ENCODE measurements at regions of chr15 and their contacts with region 1.

Region 1: GRCh38 chr15:60374628-60375081 is 23.1 kb downstream of the ANXA2 start:
- DNase-seq: peak; percentile 99
- H3K4me3 Mint-ChIP-seq: peak overlapping the region; percentile 64
- H3K27ac Mint-ChIP-seq: peak overlapping the region; percentile 92
- H3K4me1 Mint-ChIP-seq: peaks cover 67% of the 10 kb centered on the region
- H3K27me3 Mint-ChIP-seq: no peaks in the 10 kb centered on the region
- CTCF ChIP-seq: no peak

Region 2: GRCh38 chr15:60343221-60343970 is 31.3 kb before region 1 on chr15:
- CTCF ChIA-PET with region 1: interaction called, 4 read pairs
- POLR2A ChIA-PET with region 1: interaction called, 11 read pairs
- intact Hi-C with region 1: no loop called
- DNase-seq: no peak
- H3K4me3 Mint-ChIP-seq: no peak overlapping the region
- H3K27ac Mint-ChIP-seq: peak overlapping the region; percentile 63
- H3K4me1 Mint-ChIP-seq: peaks cover 30% of the 10 kb centered on the region
- H3K27me3 Mint-ChIP-seq: no peaks in the 10 kb centered on the region
- CTCF ChIP-seq: no peak

Region 3: DNA sequence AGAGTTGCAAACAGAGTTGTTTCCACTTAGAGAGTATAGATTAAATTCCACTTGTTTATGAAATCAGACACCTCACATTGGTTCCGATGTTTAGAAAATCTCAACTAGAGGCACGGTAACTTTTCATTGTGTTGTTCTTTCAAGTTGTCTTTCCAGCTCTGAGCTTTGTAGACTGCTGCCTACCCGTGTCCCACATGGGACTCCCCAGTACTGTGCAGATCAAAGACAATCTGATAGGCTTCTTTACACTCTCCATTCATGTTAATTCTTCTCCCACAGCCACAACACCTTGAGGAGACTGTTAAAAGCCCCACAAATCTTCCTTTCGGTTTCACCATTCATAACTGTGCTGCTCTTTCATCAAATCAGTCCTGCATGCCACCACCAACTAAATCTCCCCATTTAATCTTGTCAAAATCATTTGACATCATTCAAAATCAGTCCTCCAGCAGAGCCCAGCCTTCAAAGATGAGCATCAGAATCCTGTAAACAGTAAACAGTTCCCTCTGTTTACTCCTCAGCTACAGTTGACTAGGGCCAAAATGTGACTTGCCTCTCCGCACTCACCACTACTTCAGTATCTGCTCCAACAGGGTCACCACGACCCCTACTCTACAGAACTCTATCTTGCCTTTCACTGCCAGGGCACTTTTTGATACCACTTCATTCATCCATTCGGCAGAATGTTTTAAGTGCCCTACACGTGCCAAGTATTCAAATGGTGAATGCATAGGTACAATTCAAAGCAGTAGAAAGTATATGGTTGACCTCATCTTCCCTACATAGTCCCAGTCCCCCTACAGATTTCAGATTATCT is 14.8 kb after region 1 on chr15:
- CTCF ChIA-PET with region 1: interaction called, 7 read pairs
- POLR2A ChIA-PET with region 1: interaction called, 461 read pairs
- intact Hi-C with region 1: loop called (anchors 1 kb)
- DNase-seq: peak; percentile 33
- H3K4me3 Mint-ChIP-seq: peak overlapping the region; percentile 69
- H3K27ac Mint-ChIP-seq: peak overlapping the region; percentile 91
- H3K4me1 Mint-ChIP-seq: peaks cover 69% of the 10 kb centered on the region
- H3K27me3 Mint-ChIP-seq: no peaks in the 10 kb centered on the region
- CTCF ChIP-seq: no peak

Region 4: DNA sequence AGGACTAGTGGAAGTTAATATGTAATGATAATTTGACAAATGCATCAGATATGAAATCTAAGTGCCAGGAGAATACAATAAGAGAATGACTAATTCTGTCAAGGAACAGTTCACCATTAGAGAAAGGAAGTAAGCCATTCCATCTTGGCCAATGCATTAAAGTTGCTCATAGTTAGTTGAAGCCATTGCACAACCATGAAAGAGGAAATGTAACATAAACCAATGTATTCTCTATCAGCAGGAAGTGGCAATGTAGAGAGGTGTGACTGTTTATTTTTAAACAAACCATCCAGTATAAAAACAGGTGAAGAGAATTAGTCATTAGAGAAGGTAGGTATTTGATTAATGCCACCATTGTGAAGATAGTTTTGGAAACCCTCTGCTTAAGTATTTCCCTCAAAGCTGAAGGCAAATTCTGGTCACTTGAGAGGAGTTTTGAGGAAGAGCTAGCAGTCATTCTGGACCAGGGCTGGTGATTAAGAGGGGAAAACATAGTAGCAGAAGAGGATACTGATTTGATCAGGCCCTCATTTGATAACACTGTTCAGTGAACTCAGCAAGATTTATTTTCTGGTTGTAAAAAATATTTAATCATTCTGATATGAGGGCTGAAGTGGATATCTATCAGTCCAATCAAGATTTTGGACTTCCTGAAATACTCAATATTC is 33.9 kb after region 1 on chr15:
- CTCF ChIA-PET with region 1: no interaction called
- POLR2A ChIA-PET with region 1: interaction called, 58 read pairs
- intact Hi-C with region 1: no loop called
- DNase-seq: peak; percentile 95
- H3K4me3 Mint-ChIP-seq: peak overlapping the region; percentile 2
- H3K27ac Mint-ChIP-seq: peak overlapping the region; percentile 87
- H3K4me1 Mint-ChIP-seq: peaks cover 28% of the 10 kb centered on the region
- H3K27me3 Mint-ChIP-seq: no peaks in the 10 kb centered on the region
- CTCF ChIP-seq: no peak

Region 5: DNA sequence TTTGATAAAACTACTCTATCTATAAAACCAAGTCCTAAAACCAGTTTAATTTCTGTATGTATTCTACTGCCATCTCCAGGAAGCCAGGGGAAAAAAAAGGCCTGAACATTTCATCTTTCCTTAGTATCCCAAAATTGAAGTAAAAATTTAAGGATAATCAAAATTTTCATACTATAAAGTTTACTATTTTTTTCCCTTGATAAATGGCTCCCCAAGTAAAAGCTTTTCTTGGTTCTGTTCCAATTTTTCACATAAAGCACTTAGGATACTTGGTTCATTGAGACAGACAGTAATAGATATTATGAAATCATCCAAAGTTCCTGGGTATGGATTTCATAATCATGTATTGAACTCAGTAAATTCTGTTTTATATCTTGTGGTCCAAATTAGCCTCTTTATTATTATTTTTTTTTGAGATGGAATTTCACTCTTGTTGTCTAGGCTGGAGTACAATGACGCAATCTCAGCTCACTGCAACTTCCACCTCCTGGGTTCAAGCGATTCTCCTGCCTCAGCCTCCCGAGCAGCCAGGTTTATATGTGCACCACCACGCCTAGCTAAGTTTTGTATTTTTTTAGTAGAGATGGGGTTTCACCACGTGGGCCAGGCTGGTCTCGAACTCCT is 69.7 kb after region 1 on chr15:
- CTCF ChIA-PET with region 1: interaction called, 6 read pairs
- POLR2A ChIA-PET with region 1: interaction called, 20 read pairs
- intact Hi-C with region 1: no loop called
- DNase-seq: peak; percentile 50
- H3K4me3 Mint-ChIP-seq: no peak overlapping the region
- H3K27ac Mint-ChIP-seq: peak overlapping the region; percentile 39
- H3K4me1 Mint-ChIP-seq: peaks cover 5% of the 10 kb centered on the region
- H3K27me3 Mint-ChIP-seq: no peaks in the 10 kb centered on the region
- CTCF ChIP-seq: peak; percentile 45